Heart left ventricle (tissue), 16 donors: ENCODE measurements at regions of chr20 and their contacts with region 1.

Region 1: GRCh38 chr20:610130-611046 is at the start of gene TCF15:
- DNase-seq: peak; percentile 75 to 84 (median 78)
- ATAC-seq: peak; percentile 74 to 94 (median 91)
- H3K4me3 ChIP-seq: peak within 1 kb of the TSS; percentile 53 to 92 (median 71)
- H3K27ac ChIP-seq: peak within 1 kb of the TSS; percentile 49 to 93 (median 82)
- H3K4me1 ChIP-seq: peaks cover 0 to 46% (median 21%) of the 10 kb centered on the region in 12 donors
- H3K27me3 ChIP-seq: peaks cover 0 to 44% (median 0%) of the 10 kb centered on the region in 9 donors
- CTCF ChIP-seq: no peak
- POLR2A ChIP-seq: peak; percentile 55 to 84
- total RNA-seq, gene TCF15: 5.8 to 18.0 (median 10.0) TPM

Region 2: DNA sequence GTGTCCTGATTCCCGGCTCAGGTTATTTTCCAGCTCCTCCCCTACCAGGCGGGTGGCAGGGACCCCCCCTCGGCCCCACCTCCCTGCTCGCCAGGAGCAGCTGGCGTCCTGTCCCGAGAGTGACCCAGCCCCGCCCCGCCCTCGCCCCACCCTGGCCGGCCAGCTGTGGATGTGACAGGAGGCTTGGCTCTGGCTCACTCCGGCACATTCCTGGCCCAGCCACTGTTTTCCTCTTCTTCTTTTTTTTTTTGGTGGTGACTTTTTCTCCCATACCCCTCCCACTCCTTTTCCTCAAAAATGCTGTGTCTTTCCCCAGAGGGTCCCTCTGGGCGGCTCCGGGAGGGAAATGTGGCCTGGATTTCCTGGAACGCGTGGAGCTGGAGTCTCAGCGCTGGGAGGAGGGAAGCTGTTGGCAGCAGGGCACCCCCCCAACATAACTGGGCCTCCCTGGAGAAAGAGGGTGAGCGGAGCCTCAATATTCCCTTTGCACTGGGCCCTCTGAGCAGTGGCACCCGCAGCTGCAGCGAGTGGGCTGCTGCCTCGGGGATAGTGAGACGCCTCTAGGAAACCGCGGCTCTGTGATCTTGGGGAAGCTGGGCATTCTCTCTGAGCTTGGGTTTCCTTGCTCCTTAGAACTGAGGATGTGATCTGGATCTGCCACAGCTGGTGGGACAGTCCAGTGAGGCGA is 38.5 kb before region 1 on chr20:
- intact Hi-C with region 1: loop called in 3 of 10 experiments (anchors 5 kb)
- DNase-seq: peak; percentile 85 to 92 (median 88)
- ATAC-seq: peak; percentile 67 to 81 (median 72)
- H3K4me3 ChIP-seq: peak overlapping the region in 9 of 12 donors; percentile 8 to 39 (median 28)
- H3K27ac ChIP-seq: peak overlapping the region; percentile 51 to 94 (median 82)
- H3K4me1 ChIP-seq: peaks cover 4 to 84% (median 65%) of the 10 kb centered on the region in 12 donors
- H3K27me3 ChIP-seq: peaks cover 0 to 7% (median 0%) of the 10 kb centered on the region in 9 donors
- CTCF ChIP-seq: no peak
- POLR2A ChIP-seq: no peak

Region 3: GRCh38 chr20:625360-625932 is 15.1 kb after region 1 on chr20:
- intact Hi-C with region 1: loop called in 1 of 10 experiments (anchors 2 kb)
- DNase-seq: no peak
- ATAC-seq: peak in 1 of 4 donors; percentile 64
- H3K4me3 ChIP-seq: no peak overlapping the region
- H3K27ac ChIP-seq: peak overlapping the region in 1 of 12 donors; percentile 58
- H3K4me1 ChIP-seq: peaks cover 0 to 8% (median 1%) of the 10 kb centered on the region in 12 donors
- H3K27me3 ChIP-seq: no peaks in the 10 kb centered on the region
- CTCF ChIP-seq: no peak
- POLR2A ChIP-seq: no peak

Region 4: DNA sequence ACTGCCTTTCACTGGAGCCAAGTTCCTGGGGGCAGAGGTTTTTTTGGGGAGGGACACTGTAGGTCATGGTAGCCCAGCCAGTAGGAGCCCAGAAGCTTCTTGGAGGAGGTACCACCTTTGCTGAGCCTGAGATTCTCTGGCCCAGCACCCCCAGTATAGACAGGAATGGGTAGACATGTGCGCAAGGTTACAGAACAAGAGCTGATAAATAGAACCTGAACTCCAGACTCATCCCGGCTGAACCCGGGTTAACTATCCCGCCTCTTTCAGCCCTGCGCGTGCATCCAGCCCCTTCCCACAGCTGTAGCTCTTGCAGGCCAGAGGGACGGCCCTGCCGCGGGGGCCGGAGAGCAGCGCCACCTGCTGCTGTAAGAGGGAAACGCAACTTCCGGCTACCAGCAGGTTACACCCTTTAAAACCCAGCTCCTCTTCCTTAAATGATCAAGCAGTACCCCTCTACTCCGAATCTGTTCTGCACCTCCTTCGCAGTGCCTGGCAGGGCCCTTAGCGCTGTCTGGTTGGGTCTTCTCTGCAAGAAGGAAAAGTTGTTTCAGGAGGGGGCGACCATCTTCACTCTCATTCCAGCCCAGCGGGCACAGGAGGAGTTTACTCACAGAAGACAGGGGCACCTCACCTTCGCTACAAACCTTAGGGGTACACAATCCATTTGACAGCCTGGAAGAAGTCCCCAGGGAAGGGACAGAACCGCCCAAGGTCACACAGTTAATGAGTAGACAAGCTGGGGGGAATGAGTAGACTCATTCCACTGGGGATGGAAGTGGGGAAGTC is 35.1 kb after region 1 on chr20:
- intact Hi-C with region 1: loop called in 4 of 10 experiments (anchors 1 to 5 kb)
- DNase-seq: peak; percentile 68 to 89 (median 74)
- ATAC-seq: peak; percentile 63 to 85 (median 77)
- H3K4me3 ChIP-seq: no peak overlapping the region
- H3K27ac ChIP-seq: peak overlapping the region in 9 of 12 donors; percentile 15 to 65 (median 52)
- H3K4me1 ChIP-seq: peaks cover 0 to 40% (median 18%) of the 10 kb centered on the region in 12 donors
- H3K27me3 ChIP-seq: peaks cover 0 to 4% (median 0%) of the 10 kb centered on the region in 9 donors
- CTCF ChIP-seq: peak; percentile 93 to 98 (median 96)
- POLR2A ChIP-seq: no peak

Region 5: GRCh38 chr20:675453-676314 is 65.3 kb after region 1 on chr20 and contains the start of gene SCRT2:
- intact Hi-C with region 1: loop called in 1 of 10 experiments (anchors 2 kb)
- DNase-seq: peak; percentile 83 to 92 (median 86)
- ATAC-seq: peak; percentile 50 to 97 (median 92)
- H3K4me3 ChIP-seq: peak within 1 kb of the TSS in 9 of 12 donors; percentile 5 to 49 (median 36)
- H3K27ac ChIP-seq: no peak within 1 kb of the TSS
- H3K4me1 ChIP-seq: peaks cover 7 to 34% (median 17%) of the 10 kb centered on the region in 12 donors
- H3K27me3 ChIP-seq: peaks cover 0 to 66% (median 34%) of the 10 kb centered on the region in 9 donors
- CTCF ChIP-seq: no peak
- POLR2A ChIP-seq: no peak
- total RNA-seq, gene SCRT2: not detected